ENCODE measurements at regions of chr7 and their contacts with region 1.

Region 1: DNA sequence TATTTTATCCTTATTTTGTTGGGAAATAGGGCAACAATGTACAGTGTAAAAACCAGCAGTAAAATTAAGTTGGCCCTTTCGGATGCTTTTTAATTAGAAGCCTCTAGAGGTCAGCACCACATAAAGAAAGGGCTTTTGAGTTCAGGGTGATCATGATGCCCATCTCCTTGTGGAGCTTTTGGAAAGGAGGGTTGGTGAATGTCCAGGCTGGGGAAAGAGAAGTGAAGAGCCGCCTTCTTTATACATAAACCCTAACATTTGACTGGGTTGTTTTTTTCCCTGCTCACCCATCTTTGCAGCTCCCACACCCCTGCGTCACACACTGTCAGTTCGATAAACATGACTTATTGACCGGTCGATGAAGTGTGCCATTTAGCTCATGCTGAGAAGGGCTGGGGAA is 29.8 kb downstream of the MTURN start:
- DNase-seq: no peak
- ATAC-seq: no peak
- H3K4me3 Mint-ChIP-seq: no peak overlapping the region
- H3K27ac Mint-ChIP-seq: no peak overlapping the region
- H3K4me1 Mint-ChIP-seq: peaks cover 45% of the 10 kb centered on the region
- H3K27me3 Mint-ChIP-seq: peaks cover 4% of the 10 kb centered on the region

Region 2: DNA sequence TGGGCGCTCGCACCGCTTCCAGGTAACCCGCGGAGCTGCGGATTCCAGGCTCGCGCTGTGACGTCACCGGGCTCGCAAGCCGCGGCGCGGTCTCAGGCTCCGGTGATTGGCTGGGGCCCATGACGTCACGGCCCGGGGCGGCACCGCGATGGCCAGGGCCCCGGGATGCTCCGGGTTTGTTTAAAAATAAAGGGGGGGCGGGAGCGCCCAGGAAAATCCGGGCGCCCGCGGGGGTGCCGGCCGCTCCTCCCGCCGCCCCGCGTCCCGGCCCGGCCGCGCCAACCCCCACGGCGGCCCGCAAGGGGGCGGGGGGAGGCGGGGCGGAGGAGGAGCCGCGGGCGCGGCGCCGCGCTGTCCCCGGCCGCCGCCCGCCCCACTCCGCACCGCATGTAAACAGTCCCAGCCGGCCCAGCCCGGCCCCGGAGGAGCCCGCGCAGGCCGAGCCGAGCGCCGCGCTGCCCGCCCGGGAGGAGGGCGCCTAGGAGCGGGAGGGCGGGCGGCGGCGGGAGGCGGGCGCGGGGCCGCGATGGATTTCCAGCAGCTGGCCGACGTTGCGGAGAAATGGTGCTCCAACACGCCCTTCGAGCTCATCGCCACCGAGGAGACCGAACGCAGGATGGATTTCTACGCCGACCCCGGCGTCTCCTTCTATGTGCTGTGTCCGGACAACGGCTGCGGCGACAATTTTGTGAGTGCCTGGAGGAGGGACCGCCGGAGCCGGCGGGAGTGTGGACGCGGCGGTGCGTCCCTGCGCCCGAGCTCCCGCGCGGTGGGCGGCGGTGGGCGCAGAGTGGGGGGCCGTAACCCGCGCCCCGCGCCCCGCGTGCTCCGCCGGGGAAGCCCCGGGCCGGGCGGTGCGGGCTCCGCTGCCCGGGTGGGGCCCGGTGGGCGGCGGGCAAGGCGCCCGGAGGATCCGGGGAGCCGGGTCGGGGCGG is 29.7 kb before region 1 on chr7 and contains the start of gene MTURN:
- CTCF ChIA-PET with region 1: interaction called, 10 read pairs
- DNase-seq: peak; percentile 88
- ATAC-seq: peak; percentile 89
- H3K4me3 Mint-ChIP-seq: peak within 1 kb of the TSS; percentile 79
- H3K27ac Mint-ChIP-seq: peak within 1 kb of the TSS; percentile 67
- H3K4me1 Mint-ChIP-seq: peaks cover 7% of the 10 kb centered on the region
- H3K27me3 Mint-ChIP-seq: peaks cover 34% of the 10 kb centered on the region
- total RNA-seq, gene MTURN: 2.5 to 4.4 TPM

Region 3: DNA sequence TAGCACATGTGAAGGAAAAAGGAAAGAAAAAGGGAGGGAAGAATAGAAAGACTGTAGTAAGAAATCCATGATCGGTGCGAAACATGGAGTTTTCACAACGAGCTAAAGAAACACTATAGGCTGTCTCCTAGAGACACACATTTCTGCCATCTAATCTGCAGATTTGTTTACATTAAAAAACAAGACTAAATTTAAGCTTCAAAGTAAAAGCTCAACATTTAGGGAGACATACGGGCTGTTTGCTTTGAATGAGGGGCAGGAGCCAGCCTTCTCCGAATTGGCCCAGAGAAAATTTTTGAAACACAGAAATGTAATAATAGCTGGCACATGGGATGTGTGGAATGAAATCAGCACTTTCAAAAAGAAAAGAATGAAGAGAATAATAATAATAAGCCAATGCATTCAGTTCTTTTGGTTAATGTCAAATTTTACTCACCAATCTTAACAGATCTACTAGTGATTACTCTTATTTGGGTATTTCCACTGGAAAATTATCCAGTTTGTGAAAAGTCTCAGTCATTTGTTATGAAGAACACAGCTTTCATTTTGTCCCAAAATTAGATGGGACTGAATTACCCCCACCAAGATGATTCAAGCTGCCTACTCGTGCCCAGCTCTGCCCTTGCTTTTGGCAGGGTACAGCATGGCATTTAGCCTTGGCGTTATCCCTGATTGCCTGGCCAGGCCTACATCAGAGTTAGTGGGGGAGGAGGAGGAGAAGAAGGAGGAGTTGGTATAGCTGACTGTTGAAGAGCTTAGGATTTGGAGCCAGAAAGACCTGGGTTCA is 17.4 kb after region 1 on chr7:
- CTCF ChIA-PET with region 1: interaction called, 11 read pairs
- DNase-seq: no peak
- ATAC-seq: no peak
- H3K4me3 Mint-ChIP-seq: no peak overlapping the region
- H3K27ac Mint-ChIP-seq: no peak overlapping the region
- H3K4me1 Mint-ChIP-seq: peaks cover 7% of the 10 kb centered on the region
- H3K27me3 Mint-ChIP-seq: no peaks in the 10 kb centered on the region

Region 4: GRCh38 chr7:30330134-30331111 is 165.9 kb after region 1 on chr7:
- CTCF ChIA-PET with region 1: no interaction called
- DNase-seq: peak; percentile 68
- ATAC-seq: peak; percentile 90
- H3K4me3 Mint-ChIP-seq: peak overlapping the region; percentile 64
- H3K27ac Mint-ChIP-seq: peak overlapping the region; percentile 78
- H3K4me1 Mint-ChIP-seq: peaks cover 58% of the 10 kb centered on the region
- H3K27me3 Mint-ChIP-seq: no peaks in the 10 kb centered on the region

Measured in activated CD8-positive, alpha-beta memory T cell treated with anti-CD3 and anti-CD28 coated beads, Interleukin-2, amount 10 ng/mL, durations not matched to agents 7 days and 5 days (primary cell).